MCF 10A (cell line): ENCODE measurements at regions of chr9 and their contacts with region 1.

Region 1: DNA sequence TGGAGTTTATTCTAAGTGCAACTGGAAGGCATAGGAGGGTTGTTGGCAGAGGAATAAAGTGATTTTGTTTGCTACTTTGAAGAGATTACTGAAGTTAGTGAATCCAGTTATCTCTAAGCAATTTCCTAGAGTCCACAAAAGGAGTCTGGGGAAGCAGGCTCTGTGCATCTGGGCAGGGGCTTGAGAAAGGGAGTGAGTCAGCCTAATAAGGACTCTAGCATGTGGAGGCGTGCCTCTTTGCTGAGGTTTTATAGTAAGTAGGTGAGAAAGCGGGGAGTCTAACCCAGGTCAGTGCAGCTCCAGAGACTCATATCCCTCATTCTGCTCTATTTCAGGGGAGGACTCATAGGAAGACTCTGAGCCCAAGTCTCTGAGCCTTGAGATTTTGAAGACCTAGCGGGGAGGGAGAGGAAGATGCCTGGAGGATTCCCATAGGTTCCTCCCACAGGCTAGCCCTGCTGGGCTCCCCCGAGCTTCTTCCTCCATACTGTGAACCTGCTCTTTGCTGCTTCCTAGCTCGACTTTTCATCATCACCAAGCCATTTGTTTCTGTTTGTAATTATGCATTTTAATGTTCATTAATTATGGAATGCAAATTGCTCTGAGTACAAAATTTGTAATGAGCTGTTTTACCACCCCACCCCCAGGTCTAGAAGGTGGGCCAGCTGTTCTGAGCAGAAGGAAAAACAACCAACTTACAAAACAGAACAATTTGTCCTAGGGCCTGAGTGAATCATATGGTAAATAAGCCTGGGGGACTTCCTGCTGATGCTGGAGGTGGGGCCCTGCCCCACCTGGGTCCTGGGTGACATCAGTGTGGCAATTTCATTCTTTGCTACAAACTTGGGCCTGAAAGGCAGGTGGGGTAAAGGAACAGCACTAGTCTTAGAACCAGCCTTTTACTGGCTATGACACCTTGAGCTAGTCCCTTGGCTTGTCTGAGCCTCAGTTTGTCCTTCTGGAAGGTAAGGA is 150.2 kb downstream of the TRIM32 start:
- DNase-seq: peak; percentile 91
- H3K4me3 Mint-ChIP-seq: peak overlapping the region; percentile 75
- H3K27ac Mint-ChIP-seq: peak overlapping the region; percentile 98
- H3K4me1 Mint-ChIP-seq: peaks cover 27% of the 10 kb centered on the region
- H3K27me3 Mint-ChIP-seq: no peaks in the 10 kb centered on the region
- CTCF ChIP-seq: no peak

Region 2: DNA sequence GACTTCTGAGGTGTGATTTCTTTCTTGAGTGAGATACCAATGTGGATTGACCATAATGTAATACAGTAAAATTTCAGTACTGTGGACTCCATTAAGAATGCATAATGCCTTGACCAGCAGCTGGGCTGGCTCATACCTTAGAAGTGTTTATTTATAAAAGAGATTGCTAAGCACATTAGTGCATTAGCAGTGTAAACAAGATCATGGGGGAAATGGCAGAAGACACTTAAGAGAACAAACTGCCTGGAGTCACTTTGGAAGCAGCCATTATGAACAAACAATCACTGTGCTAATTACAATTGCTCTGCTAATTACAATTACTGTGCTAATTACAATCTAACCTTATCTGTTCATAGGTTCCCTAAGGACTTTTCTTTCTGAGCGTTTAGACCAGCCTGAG is 46.0 kb before region 1 on chr9:
- CTCF ChIA-PET with region 1: no interaction called
- POLR2A ChIA-PET with region 1: no interaction called
- intact Hi-C with region 1: no loop called
- DNase-seq: no peak
- H3K4me3 Mint-ChIP-seq: no peak overlapping the region
- H3K27ac Mint-ChIP-seq: no peak overlapping the region
- H3K4me1 Mint-ChIP-seq: no peaks in the 10 kb centered on the region
- H3K27me3 Mint-ChIP-seq: no peaks in the 10 kb centered on the region
- CTCF ChIP-seq: no peak

Region 3: GRCh38 chr9:116849721-116850120 is 12.4 kb after region 1 on chr9:
- CTCF ChIA-PET with region 1: interaction called, 11 read pairs
- POLR2A ChIA-PET with region 1: interaction called, 63 read pairs
- intact Hi-C with region 1: no loop called
- DNase-seq: no peak
- H3K4me3 Mint-ChIP-seq: no peak overlapping the region
- H3K27ac Mint-ChIP-seq: no peak overlapping the region
- H3K4me1 Mint-ChIP-seq: no peaks in the 10 kb centered on the region
- H3K27me3 Mint-ChIP-seq: no peaks in the 10 kb centered on the region
- CTCF ChIP-seq: no peak